Natural killer cell (primary cell): ENCODE measurements at regions of chr12 and their contacts with region 1.

Region 1: DNA sequence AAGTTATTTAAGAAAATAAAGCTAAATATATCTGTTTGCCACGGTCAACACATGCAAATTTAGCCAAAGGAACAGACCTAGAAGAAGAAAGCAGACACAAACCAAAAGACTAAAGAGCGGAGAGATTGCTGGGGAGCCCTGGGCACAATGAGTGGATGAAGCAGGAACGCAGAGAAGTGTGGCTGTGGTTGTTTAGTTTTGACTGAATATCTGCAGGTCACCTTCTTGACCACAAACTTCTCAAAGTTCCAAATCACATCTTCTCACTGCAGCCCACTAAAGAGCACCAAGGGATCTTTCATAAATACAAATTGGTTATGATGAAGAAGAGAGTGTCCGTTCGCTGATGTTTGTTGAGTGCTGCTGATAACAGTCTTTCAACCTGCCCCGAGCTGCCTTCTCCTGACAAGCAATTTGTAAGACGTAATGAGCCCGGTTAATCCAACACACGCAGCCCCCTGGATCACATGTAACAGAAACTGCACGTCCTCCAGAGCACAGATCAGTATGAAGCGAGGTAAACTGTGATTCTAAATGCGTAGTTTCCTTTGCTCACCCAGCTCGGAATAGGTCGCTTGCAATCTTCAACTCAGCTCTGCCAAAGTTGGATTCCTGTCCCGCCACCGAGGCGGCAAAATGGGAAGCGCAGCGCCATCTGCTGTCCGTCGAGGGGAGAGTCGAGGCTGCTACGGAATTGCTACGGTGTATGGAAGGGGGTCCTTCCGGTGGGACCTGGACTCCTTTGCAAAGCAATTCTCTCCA is 120.8 kb downstream of the GXYLT1 start:
- DNase-seq: peak; percentile 55 to 79
- ATAC-seq: peak; percentile 80 to 95 (median 90)
- H3K4me3 ChIP-seq: peak overlapping the region; percentile 19
- H3K4me3 Mint-ChIP-seq: peak overlapping the region; percentile 71
- H3K27ac ChIP-seq: no peak overlapping the region
- H3K27ac Mint-ChIP-seq: peak overlapping the region in 1 of 2 donors; percentile 51
- H3K4me1 ChIP-seq: peaks cover 8% of the 10 kb centered on the region
- H3K4me1 Mint-ChIP-seq: peaks cover 11 to 15% of the 10 kb centered on the region in 2 donors
- H3K27me3 ChIP-seq: no peaks in the 10 kb centered on the region
- H3K27me3 Mint-ChIP-seq: peaks cover 3 to 11% of the 10 kb centered on the region in 2 donors
- CTCF ChIP-seq: peak; percentile 93

Region 2: GRCh38 chr12:40946612-40947194 is 1077.2 kb before region 1 on chr12:
- intact Hi-C with region 1: loop called (anchors 5 kb)
- DNase-seq: peak in 1 of 2 donors; percentile 49
- ATAC-seq: no peak
- H3K4me3 ChIP-seq: no peak overlapping the region
- H3K4me3 Mint-ChIP-seq: no peak overlapping the region
- H3K27ac ChIP-seq: no peak overlapping the region
- H3K27ac Mint-ChIP-seq: no peak overlapping the region
- H3K4me1 ChIP-seq: no peaks in the 10 kb centered on the region
- H3K4me1 Mint-ChIP-seq: no peaks in the 10 kb centered on the region
- H3K27me3 ChIP-seq: no peaks in the 10 kb centered on the region
- H3K27me3 Mint-ChIP-seq: no peaks in the 10 kb centered on the region
- CTCF ChIP-seq: peak; percentile 37

Region 3: GRCh38 chr12:42325653-42326474 is 301.9 kb after region 1 on chr12 and contains the starts of genes PPHLN1 and ZCRB1:
- intact Hi-C with region 1: no loop called
- DNase-seq: peak; percentile 77 to 87
- ATAC-seq: peak; percentile 87 to 95 (median 92)
- H3K4me3 ChIP-seq: peak within 1 kb of the TSS; percentile 82
- H3K4me3 Mint-ChIP-seq: peak within 1 kb of the TSS; percentile 99
- H3K27ac ChIP-seq: peak within 1 kb of the TSS; percentile 81
- H3K27ac Mint-ChIP-seq: peak within 1 kb of the TSS; percentile 96 to 99
- H3K4me1 ChIP-seq: peaks cover 20% of the 10 kb centered on the region
- H3K4me1 Mint-ChIP-seq: peaks cover 49 to 54% of the 10 kb centered on the region in 2 donors
- H3K27me3 ChIP-seq: no peaks in the 10 kb centered on the region
- H3K27me3 Mint-ChIP-seq: no peaks in the 10 kb centered on the region
- CTCF ChIP-seq: no peak
- total RNA-seq, gene PPHLN1: 98.2 to 101 (median 101) TPM
- total RNA-seq, gene ZCRB1: 28.0 to 35.9 (median 33.8) TPM